Mammary epithelial cell (primary cell): ENCODE measurements at regions of chr3 and their contacts with region 1.

Region 1: GRCh38 chr3:71504250-71505036 is 79.1 kb downstream of the FOXP1 start:
- DNase-seq: peak; percentile 89
- H3K4me3 ChIP-seq: peak overlapping the region; percentile 15 to 30 (median 26)
- H3K27ac ChIP-seq: peak overlapping the region; percentile 93
- H3K4me1 ChIP-seq: peaks cover 24% of the 10 kb centered on the region
- H3K27me3 ChIP-seq: no peaks in the 10 kb centered on the region
- CTCF ChIP-seq: no peak

Region 2: DNA sequence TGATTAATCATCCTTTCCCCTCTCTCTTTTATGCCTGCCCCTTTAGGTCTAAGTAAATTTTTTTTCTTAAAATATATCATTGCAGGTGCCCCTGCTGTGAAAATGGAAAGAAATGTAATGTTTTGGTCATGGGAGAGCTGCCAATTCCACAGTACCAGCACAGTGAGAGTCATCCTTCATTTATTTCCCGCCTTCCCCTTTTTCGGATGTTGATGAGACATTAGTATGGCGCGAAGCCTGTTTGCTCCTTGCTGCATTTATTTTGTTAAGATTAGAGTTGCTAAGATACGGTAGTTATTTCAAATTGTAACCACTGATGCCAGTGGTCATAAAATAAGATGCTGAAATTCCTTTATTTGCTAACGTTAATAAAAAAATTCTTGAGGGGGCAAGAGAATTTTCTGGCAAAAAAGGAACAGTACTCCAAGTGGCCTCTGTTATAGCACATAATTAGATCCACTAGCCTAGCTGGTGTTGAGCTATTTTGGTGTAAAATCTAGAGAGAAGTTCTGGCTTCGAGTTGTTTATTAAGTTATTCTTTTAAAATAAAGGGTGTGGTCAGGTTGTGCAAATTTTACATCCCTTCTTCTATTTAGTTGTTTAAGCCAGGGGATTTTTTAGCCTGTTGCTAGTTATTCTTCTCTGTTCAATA is 1254.8 kb before region 1 on chr3:
- CTCF ChIA-PET with region 1: no interaction called
- dilution Hi-C with region 1: no loop called
- in situ Hi-C with region 1: no loop called
- intact Hi-C with region 1: no loop called
- DNase-seq: no peak
- H3K4me3 ChIP-seq: no peak overlapping the region
- H3K27ac ChIP-seq: no peak overlapping the region
- H3K4me1 ChIP-seq: no peaks in the 10 kb centered on the region
- H3K27me3 ChIP-seq: no peaks in the 10 kb centered on the region
- CTCF ChIP-seq: no peak

Region 3: DNA sequence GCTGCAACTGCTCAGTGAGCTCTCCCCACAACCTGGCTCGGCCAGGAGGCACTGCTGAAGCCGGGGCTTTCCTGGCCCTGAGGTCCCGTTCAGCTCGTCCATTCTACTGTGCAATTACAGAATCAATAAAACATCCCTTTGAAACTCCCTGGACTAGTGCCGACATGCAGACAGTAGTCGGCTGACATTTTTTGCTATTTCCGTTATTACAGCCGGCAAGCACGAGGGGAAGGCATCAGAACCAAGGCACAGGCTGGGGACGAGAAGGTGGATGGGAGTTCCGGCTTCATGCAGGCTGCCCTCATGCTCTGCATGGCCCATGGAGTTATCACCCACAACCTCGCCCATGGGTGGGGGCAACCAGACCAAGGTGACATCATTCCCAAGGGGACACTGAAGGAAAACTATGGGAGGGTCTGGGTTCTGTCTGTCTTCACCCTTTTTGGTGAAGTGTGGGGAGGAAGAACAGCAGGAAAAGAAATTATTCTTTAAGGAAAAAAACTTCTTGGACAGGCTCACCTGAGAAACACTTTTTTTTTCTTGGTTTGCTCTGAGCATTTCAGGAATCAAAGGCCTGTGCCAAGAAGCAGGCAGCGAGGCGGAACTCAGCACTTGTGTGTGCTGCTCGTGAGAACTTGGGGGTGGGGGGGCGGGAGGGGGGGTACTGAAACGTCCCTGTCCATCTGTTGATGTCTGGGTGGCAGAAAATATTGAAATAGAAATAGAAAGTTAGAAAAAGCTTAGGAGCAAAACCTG is 75.4 kb before region 1 on chr3:
- CTCF ChIA-PET with region 1: no interaction called
- dilution Hi-C with region 1: no loop called
- in situ Hi-C with region 1: no loop called
- intact Hi-C with region 1: loop called (anchors 2 kb)
- DNase-seq: peak; percentile 90
- H3K4me3 ChIP-seq: peak overlapping the region; percentile 18 to 30 (median 26)
- H3K27ac ChIP-seq: peak overlapping the region; percentile 92
- H3K4me1 ChIP-seq: peaks cover 63% of the 10 kb centered on the region
- H3K27me3 ChIP-seq: no peaks in the 10 kb centered on the region
- CTCF ChIP-seq: no peak

Region 4: DNA sequence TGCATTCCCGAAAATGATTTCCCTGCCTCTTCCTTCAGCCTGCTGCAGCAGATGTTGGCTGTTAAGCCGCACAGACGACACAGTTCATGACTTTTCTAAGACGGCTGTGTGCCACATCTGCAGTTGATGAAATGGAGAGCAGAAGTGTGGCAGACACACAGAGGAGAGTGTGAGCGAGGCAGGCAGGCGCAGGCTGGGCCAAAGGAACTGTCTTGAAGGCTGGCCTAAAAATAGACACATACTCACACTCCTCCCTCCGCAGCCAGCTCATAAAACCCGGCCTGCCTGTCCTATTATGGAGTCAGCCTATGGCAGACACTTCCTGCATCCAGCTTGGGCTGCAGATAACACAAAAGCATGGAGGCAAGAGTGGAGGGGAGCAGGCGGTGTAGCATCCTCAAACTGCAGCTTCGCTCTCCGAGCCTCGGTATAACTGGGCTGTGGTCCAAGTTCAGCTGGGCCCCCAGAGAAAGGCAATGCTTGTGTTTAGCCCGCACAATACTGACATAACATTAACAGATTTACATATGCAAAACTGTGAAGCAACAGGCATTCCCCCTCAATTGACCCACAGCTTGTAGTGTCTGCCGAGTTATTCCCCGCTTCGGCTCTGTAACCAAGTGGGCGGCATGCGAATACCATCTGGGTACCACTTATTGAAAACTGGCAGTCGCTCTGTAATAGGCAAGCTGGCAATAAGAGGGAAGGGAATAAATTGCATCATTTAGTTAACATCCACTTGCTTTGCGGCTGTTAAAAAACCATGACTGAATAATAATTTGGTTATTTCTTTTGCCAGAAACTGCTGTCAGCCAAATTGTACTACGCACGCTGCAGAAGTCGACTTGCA is 38.3 kb after region 1 on chr3:
- CTCF ChIA-PET with region 1: no interaction called
- dilution Hi-C with region 1: no loop called
- in situ Hi-C with region 1: no loop called
- intact Hi-C with region 1: loop called (anchors 5 kb)
- DNase-seq: peak; percentile 65
- H3K4me3 ChIP-seq: no peak overlapping the region
- H3K27ac ChIP-seq: no peak overlapping the region
- H3K4me1 ChIP-seq: peaks cover 18% of the 10 kb centered on the region
- H3K27me3 ChIP-seq: no peaks in the 10 kb centered on the region
- CTCF ChIP-seq: no peak